Activated T-helper 1 cell treated with anti-CD3 and anti-CD28 coated beads, Interleukin-12 subunit alpha, Interleukin-12 subunit beta, Interleukin-2, Interleukin-4 antibody, amounts not matched to agents 30 ng/mL and 10 ng/mL and 1 ng/mL, durations not matched to agents 14 hours and 24 hours and 36 hours (primary cell): ENCODE measurements at regions of chr1 and their contacts with region 1.

Region 1: GRCh38 chr1:43991476-43992231 is at the start of gene CCDC24:
- DNase-seq: peak; percentile 74
- H3K4me3 Mint-ChIP-seq: peak within 1 kb of the TSS; percentile 91
- H3K27ac Mint-ChIP-seq: peak within 1 kb of the TSS; percentile 82
- H3K4me1 Mint-ChIP-seq: peaks cover 13% of the 10 kb centered on the region
- H3K27me3 Mint-ChIP-seq: no peaks in the 10 kb centered on the region
- total RNA-seq, gene CCDC24: 2.7 TPM in 2 replicates

Region 2: GRCh38 chr1:43908863-43909262 is 82.8 kb before region 1 on chr1:
- intact Hi-C with region 1: no loop called
- DNase-seq: no peak
- H3K4me3 Mint-ChIP-seq: no peak overlapping the region
- H3K27ac Mint-ChIP-seq: no peak overlapping the region
- H3K4me1 Mint-ChIP-seq: no peaks in the 10 kb centered on the region
- H3K27me3 Mint-ChIP-seq: no peaks in the 10 kb centered on the region

Region 3: GRCh38 chr1:44029906-44030604 is 38.4 kb after region 1 on chr1:
- intact Hi-C with region 1: loop called (anchors 1 kb)
- DNase-seq: peak; percentile 86
- H3K4me3 Mint-ChIP-seq: peak overlapping the region; percentile 90
- H3K27ac Mint-ChIP-seq: peak overlapping the region; percentile 92
- H3K4me1 Mint-ChIP-seq: peaks cover 30% of the 10 kb centered on the region
- H3K27me3 Mint-ChIP-seq: peaks cover 2% of the 10 kb centered on the region

Region 4: DNA sequence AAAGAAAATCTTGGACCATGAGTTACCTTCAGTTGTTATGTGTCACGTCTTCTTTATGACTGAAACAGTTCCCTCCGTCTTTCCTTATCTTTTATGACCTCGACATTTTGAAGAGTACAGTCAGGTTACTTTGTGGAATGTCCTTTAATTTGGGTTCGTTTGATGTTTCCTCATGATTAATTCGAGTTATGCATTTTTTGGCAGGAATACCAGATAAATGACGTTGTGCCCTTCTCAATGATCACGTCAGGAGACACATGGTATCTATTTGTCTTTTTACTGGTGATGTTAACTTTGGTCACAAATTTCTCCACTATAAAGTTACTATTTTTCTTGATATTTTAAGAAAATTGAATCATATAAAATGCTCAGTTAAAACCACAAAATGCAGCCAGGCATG is 109.7 kb after region 1 on chr1:
- intact Hi-C with region 1: no loop called
- DNase-seq: no peak
- H3K4me3 Mint-ChIP-seq: no peak overlapping the region
- H3K27ac Mint-ChIP-seq: no peak overlapping the region
- H3K4me1 Mint-ChIP-seq: no peaks in the 10 kb centered on the region
- H3K27me3 Mint-ChIP-seq: peaks cover 9% of the 10 kb centered on the region